HEK293 (cell line): ENCODE measurements at regions of chr2 and their contacts with region 1.

Region 1: DNA sequence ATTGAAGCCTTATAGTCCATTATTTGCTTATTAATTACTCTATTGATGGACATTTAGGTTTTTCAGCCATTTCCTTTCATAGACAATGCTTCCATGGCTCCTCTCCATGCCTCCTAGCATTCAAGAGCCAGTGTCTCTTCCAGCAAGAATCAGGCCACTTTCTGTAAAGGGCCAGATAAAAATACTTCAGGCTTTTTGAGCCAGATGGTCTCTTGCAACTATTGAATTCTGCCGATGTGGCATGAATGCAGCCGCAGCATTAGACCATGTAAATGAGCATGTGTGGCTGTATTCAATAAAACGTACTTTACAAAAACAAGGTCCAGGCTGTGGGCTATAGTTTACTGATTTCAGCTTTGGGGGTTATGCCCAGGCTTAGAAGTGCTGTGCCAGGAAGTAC is 38.5 kb downstream of the TRAF3IP1 start:
- H3K4me3 ChIP-seq: no peak overlapping the region
- H3K27ac ChIP-seq: no peak overlapping the region
- H3K4me1 ChIP-seq: no peaks in the 10 kb centered on the region
- CTCF ChIP-seq: no peak

Region 2: GRCh38 chr2:238127317-238128200 is 231.2 kb before region 1 on chr2:
- CTCF ChIA-PET with region 1: no interaction called
- POLR2A ChIA-PET with region 1: no interaction called
- H3K4me3 ChIP-seq: no peak overlapping the region
- H3K27ac ChIP-seq: no peak overlapping the region
- H3K4me1 ChIP-seq: no peaks in the 10 kb centered on the region
- CTCF ChIP-seq: no peak

Region 3: GRCh38 chr2:238370823-238371372 is 12.1 kb after region 1 on chr2:
- CTCF ChIA-PET with region 1: interaction called, 34 read pairs
- POLR2A ChIA-PET with region 1: interaction called, 3 read pairs
- H3K4me3 ChIP-seq: no peak overlapping the region
- H3K27ac ChIP-seq: no peak overlapping the region
- H3K4me1 ChIP-seq: no peaks in the 10 kb centered on the region
- CTCF ChIP-seq: peak; percentile 89

Region 4: DNA sequence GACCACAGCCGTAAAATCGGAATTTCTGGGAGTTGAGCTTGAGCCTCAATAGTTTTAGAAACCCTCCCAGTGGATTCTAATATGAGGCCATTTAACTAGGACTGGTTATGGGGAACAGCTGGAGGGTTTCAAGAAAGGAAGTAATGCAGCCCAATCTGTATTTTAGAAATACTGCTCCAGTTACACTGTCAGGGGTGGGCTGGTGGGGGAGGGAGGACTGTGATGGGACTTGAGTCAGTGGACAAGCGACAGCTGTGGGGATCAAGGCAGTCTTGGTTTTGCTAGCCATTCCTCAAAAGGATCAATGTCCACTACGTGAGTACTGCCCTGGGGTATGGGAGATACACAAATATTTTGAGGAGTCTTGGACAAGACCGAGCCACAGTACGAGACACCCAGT is 102.7 kb after region 1 on chr2:
- CTCF ChIA-PET with region 1: interaction called, 12 read pairs
- POLR2A ChIA-PET with region 1: no interaction called
- H3K4me3 ChIP-seq: no peak overlapping the region
- H3K27ac ChIP-seq: no peak overlapping the region
- H3K4me1 ChIP-seq: no peaks in the 10 kb centered on the region
- CTCF ChIP-seq: no peak

Region 5: DNA sequence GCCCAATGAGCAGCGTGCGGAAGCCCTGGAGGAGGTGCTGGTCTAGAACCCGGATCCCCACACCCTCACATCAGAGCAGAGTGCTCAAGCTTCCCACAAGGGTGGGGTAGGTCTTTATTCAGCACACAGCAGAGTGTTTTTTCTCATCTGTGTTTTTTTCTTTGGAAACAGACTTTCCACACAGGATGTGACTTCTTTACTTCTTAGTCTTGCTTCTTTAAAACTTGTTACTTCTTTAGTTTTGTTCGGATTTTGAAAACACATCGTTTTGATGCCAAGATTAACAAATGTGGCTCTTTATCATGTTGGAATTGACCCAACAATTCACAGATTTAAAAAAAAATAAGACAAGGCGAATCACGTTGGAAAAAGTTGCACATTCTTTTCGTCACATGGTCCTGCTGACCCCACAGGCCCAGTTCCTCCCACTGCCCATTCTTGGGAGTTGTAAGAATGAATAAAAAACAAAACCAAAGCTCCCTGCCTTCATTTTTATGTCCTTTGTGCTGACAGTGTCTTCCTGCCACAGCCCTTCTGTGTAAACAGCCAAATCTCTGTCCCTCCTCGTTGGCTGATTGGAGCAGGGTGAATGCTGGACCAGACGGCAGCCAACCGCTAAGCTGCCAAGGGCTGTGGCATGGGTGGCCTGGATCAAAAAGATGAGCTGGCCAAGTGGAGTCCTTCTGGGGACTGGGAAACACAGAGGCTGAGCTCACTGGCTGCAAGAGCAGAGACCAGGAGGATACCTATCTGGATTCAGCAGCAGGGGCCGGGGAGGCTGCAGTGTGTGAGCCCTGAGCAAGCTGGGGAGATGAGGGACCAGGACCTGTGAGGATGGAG is 570.7 kb after region 1 on chr2:
- CTCF ChIA-PET with region 1: no interaction called
- POLR2A ChIA-PET with region 1: no interaction called
- H3K4me3 ChIP-seq: no peak overlapping the region
- H3K27ac ChIP-seq: no peak overlapping the region
- H3K4me1 ChIP-seq: no peaks in the 10 kb centered on the region
- CTCF ChIP-seq: no peak